Activated CD4-positive, alpha-beta memory T cell treated with anti-CD3 and anti-CD28 coated beads for 36 hours (primary cell): ENCODE measurements at regions of chr11 and their contacts with region 1.

Region 1: GRCh38 chr11:93031386-93031785 is 61.9 kb downstream of the MTNR1B start:
- DNase-seq: peak; percentile 31
- H3K4me3 Mint-ChIP-seq: no peak overlapping the region
- H3K27ac Mint-ChIP-seq: peak overlapping the region; percentile 6
- H3K4me1 Mint-ChIP-seq: peaks cover 5% of the 10 kb centered on the region
- H3K27me3 Mint-ChIP-seq: no peaks in the 10 kb centered on the region

Region 2: GRCh38 chr11:92962446-92962845 is 68.9 kb before region 1 on chr11:
- CTCF ChIA-PET with region 1: no interaction called
- POLR2A ChIA-PET with region 1: no interaction called
- intact Hi-C with region 1: loop called (anchors 1 kb)
- DNase-seq: no peak
- H3K4me3 Mint-ChIP-seq: no peak overlapping the region
- H3K27ac Mint-ChIP-seq: no peak overlapping the region
- H3K4me1 Mint-ChIP-seq: peaks cover 5% of the 10 kb centered on the region
- H3K27me3 Mint-ChIP-seq: no peaks in the 10 kb centered on the region

Region 3: GRCh38 chr11:93054881-93055280 is 23.5 kb after region 1 on chr11:
- CTCF ChIA-PET with region 1: no interaction called
- POLR2A ChIA-PET with region 1: no interaction called
- intact Hi-C with region 1: loop called (anchors 1 kb)
- DNase-seq: peak; percentile 43
- H3K4me3 Mint-ChIP-seq: peak overlapping the region; percentile 7
- H3K27ac Mint-ChIP-seq: peak overlapping the region; percentile 75
- H3K4me1 Mint-ChIP-seq: peaks cover 8% of the 10 kb centered on the region
- H3K27me3 Mint-ChIP-seq: peaks cover 6% of the 10 kb centered on the region